ENCODE measurements at regions of chr4 and their contacts with region 1.

Region 1: DNA sequence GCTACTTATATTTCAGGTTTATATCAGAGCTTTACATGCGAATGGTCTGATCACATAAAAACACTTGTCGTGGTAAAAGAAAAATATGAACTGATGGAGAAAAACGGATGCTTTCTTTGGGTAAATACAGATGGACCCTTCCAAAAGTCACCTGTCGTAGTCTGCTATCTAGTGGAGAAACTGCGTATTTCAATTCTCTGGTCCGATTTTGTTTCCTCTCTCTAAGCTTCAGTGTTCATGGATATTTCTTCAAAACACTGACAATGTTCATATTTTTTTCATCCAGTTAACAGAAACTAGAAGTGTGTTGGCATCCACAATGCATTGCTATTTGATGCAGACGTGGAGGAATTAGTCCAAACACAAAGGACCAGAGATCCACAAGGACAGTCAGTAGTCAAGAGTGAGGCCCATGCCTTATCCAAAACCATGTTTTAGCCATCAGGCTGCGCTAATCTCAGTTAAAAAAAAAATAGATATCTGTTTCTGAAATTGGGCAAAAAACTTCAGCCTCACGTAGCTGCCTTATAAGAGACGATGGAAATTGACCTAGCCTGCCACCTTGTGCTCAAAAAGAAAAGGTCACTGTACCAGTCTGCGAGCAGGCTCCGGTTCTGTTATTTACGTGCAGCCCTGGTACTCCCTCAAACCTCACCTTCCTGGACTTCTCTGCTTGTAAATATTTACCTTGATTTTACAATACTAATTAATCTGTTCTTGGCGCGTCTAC is 16.0 kb downstream of the MEPE start:
- DNase-seq: peak; percentile 42
- ATAC-seq: peak; percentile 89
- H3K4me3 Mint-ChIP-seq: peak overlapping the region; percentile 59
- H3K27ac Mint-ChIP-seq: no peak overlapping the region
- H3K4me1 Mint-ChIP-seq: peaks cover 31% of the 10 kb centered on the region
- H3K27me3 Mint-ChIP-seq: no peaks in the 10 kb centered on the region; the same call in 1 of the 2 replicates
- CTCF ChIP-seq: peak; percentile 56

Region 2: GRCh38 chr4:87543835-87544461 is 304.8 kb before region 1 on chr4:
- CTCF ChIA-PET with region 1: interaction called, 39 read pairs
- POLR2A ChIA-PET with region 1: no interaction called
- DNase-seq: peak; percentile 23
- ATAC-seq: peak; percentile 94
- H3K4me3 Mint-ChIP-seq: no peak overlapping the region
- H3K27ac Mint-ChIP-seq: 0 out of 2 replicates have a peak overlapping the region, but pooled peaks have one; percentile 53
- H3K4me1 Mint-ChIP-seq: peaks cover 18% of the 10 kb centered on the region
- H3K27me3 Mint-ChIP-seq: no peaks in the 10 kb centered on the region; the same call in 1 of the 2 replicates
- CTCF ChIP-seq: peak; percentile 38

Region 3: GRCh38 chr4:87872028-87872427 is 23.2 kb after region 1 on chr4:
- CTCF ChIA-PET with region 1: no interaction called
- POLR2A ChIA-PET with region 1: no interaction called
- DNase-seq: no peak
- ATAC-seq: no peak
- H3K4me3 Mint-ChIP-seq: no peak overlapping the region
- H3K27ac Mint-ChIP-seq: no peak overlapping the region
- H3K4me1 Mint-ChIP-seq: peaks cover 31% of the 10 kb centered on the region
- H3K27me3 Mint-ChIP-seq: peaks cover 17% of the 10 kb centered on the region
- CTCF ChIP-seq: no peak

Region 4: GRCh38 chr4:87901422-87901992 is 52.7 kb after region 1 on chr4:
- CTCF ChIA-PET with region 1: interaction called, 11 read pairs
- POLR2A ChIA-PET with region 1: no interaction called
- DNase-seq: no peak
- ATAC-seq: no peak
- H3K4me3 Mint-ChIP-seq: no peak overlapping the region
- H3K27ac Mint-ChIP-seq: no peak overlapping the region
- H3K4me1 Mint-ChIP-seq: peaks cover 34% of the 10 kb centered on the region
- H3K27me3 Mint-ChIP-seq: no peaks in the 10 kb centered on the region
- CTCF ChIP-seq: no peak

Region 5: GRCh38 chr4:87973283-87974169 is 124.7 kb after region 1 on chr4:
- CTCF ChIA-PET with region 1: interaction called, 22 read pairs
- POLR2A ChIA-PET with region 1: no interaction called
- DNase-seq: peak; percentile 66
- ATAC-seq: peak; percentile 59
- H3K4me3 Mint-ChIP-seq: peak overlapping the region; percentile 55
- H3K27ac Mint-ChIP-seq: peak overlapping the region; percentile 93
- H3K4me1 Mint-ChIP-seq: peaks cover 48% of the 10 kb centered on the region
- H3K27me3 Mint-ChIP-seq: no peaks in the 10 kb centered on the region
- CTCF ChIP-seq: peak; percentile 78

Region 6: DNA sequence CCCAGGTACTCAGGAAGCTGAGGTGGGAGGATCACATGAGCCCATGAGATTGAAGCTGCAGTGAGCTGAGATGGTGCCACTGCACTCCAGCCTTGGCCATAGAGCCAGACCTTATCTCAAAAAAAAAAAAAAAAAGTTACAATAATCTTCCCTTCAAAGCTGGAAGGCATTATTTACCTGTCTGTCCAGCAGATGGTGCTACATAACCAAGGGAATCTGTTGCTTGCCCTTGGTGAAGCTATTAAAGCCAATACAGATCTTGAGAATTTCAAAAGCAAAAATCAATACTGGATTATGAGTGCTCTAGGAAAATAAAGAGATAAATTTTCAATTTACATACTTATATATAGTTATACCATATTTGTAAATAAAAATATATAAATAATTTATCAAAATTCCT is 184.5 kb after region 1 on chr4:
- CTCF ChIA-PET with region 1: interaction called, 14 read pairs
- POLR2A ChIA-PET with region 1: no interaction called
- DNase-seq: peak; percentile 22
- ATAC-seq: peak; percentile 75
- H3K4me3 Mint-ChIP-seq: no peak overlapping the region
- H3K27ac Mint-ChIP-seq: no peak overlapping the region
- H3K4me1 Mint-ChIP-seq: no peaks in the 10 kb centered on the region
- H3K27me3 Mint-ChIP-seq: peaks cover 3% of the 10 kb centered on the region; the same call in 1 of the 2 replicates
- CTCF ChIP-seq: peak; percentile 37; the same call in 1 of the 2 replicates

Measured in WTC11 (cell line).